ENCODE measurements at regions of chr21 and their contacts with region 1.

Region 1: GRCh38 chr21:44657635-44658540 is at the start of gene KRTAP12-3:
- DNase-seq: peak; percentile 33 to 94 (median 60)
- ATAC-seq: peak; percentile 66
- H3K4me3 ChIP-seq: peak within 1 kb of the TSS; percentile 8
- H3K4me3 Mint-ChIP-seq: peak within 1 kb of the TSS; percentile 43
- H3K27ac ChIP-seq: peak within 1 kb of the TSS; percentile 73 to 75
- H3K27ac Mint-ChIP-seq: peak within 1 kb of the TSS; percentile 92
- H3K4me1 ChIP-seq: peaks cover 61% of the 10 kb centered on the region
- H3K4me1 Mint-ChIP-seq: peaks cover 61% of the 10 kb centered on the region
- H3K27me3 ChIP-seq: no peaks in the 10 kb centered on the region
- H3K27me3 Mint-ChIP-seq: no peaks in the 10 kb centered on the region
- CTCF ChIP-seq: no peak
- total RNA-seq, gene KRTAP12-3: not detected

Region 2: GRCh38 chr21:44547656-44548331 is 110.1 kb before region 1 on chr21:
- CTCF ChIA-PET with region 1: no interaction called
- POLR2A ChIA-PET with region 1: interaction called, 15 read pairs
- intact Hi-C with region 1: loop called in 1 of 2 experiments (anchors 5 kb)
- DNase-seq: peak in 12 of 14 experiments; percentile 16 to 74 (median 36)
- ATAC-seq: peak; percentile 94
- H3K4me3 ChIP-seq: peak overlapping the region; percentile 38
- H3K4me3 Mint-ChIP-seq: peak overlapping the region; percentile 83
- H3K27ac ChIP-seq: peak overlapping the region; percentile 6 to 72
- H3K27ac Mint-ChIP-seq: peak overlapping the region; percentile 90
- H3K4me1 ChIP-seq: peaks cover 18% of the 10 kb centered on the region
- H3K4me1 Mint-ChIP-seq: peaks cover 33% of the 10 kb centered on the region
- H3K27me3 ChIP-seq: no peaks in the 10 kb centered on the region
- H3K27me3 Mint-ChIP-seq: no peaks in the 10 kb centered on the region
- CTCF ChIP-seq: no peak

Region 3: GRCh38 chr21:44618504-44618903 is 39.4 kb before region 1 on chr21:
- CTCF ChIA-PET with region 1: no interaction called
- POLR2A ChIA-PET with region 1: interaction called, 40 read pairs
- intact Hi-C with region 1: loop called (anchors 2 to 5 kb)
- DNase-seq: peak in 4 of 14 experiments; percentile 23 to 55 (median 34)
- ATAC-seq: peak; percentile 55
- H3K4me3 ChIP-seq: no peak overlapping the region
- H3K4me3 Mint-ChIP-seq: peak overlapping the region; percentile 31
- H3K27ac ChIP-seq: peak overlapping the region; percentile 44 to 74
- H3K27ac Mint-ChIP-seq: peak overlapping the region; percentile 88
- H3K4me1 ChIP-seq: peaks cover 42% of the 10 kb centered on the region
- H3K4me1 Mint-ChIP-seq: peaks cover 52% of the 10 kb centered on the region
- H3K27me3 ChIP-seq: no peaks in the 10 kb centered on the region
- H3K27me3 Mint-ChIP-seq: no peaks in the 10 kb centered on the region
- CTCF ChIP-seq: no peak

Region 4: GRCh38 chr21:44691686-44692085 is 33.8 kb after region 1 on chr21:
- CTCF ChIA-PET with region 1: no interaction called
- POLR2A ChIA-PET with region 1: interaction called, 4 read pairs
- intact Hi-C with region 1: loop called in 1 of 2 experiments (anchors 2 kb)
- DNase-seq: no peak
- ATAC-seq: no peak
- H3K4me3 ChIP-seq: no peak overlapping the region
- H3K4me3 Mint-ChIP-seq: no peak overlapping the region
- H3K27ac ChIP-seq: no peak overlapping the region
- H3K27ac Mint-ChIP-seq: no peak overlapping the region
- H3K4me1 ChIP-seq: peaks cover 5% of the 10 kb centered on the region
- H3K4me1 Mint-ChIP-seq: peaks cover 19% of the 10 kb centered on the region
- H3K27me3 ChIP-seq: peaks cover 2 to 6% of the 10 kb centered on the region in 2 experiments
- H3K27me3 Mint-ChIP-seq: peaks cover 27% of the 10 kb centered on the region
- CTCF ChIP-seq: no peak

Region 5: GRCh38 chr21:44709426-44710293 is 51.8 kb after region 1 on chr21:
- CTCF ChIA-PET with region 1: no interaction called
- POLR2A ChIA-PET with region 1: interaction called, 18 read pairs
- intact Hi-C with region 1: no loop called
- DNase-seq: peak in 5 of 14 experiments; percentile 32 to 47 (median 36)
- ATAC-seq: peak; percentile 59
- H3K4me3 ChIP-seq: peak overlapping the region; percentile 5
- H3K4me3 Mint-ChIP-seq: peak overlapping the region; percentile 62
- H3K27ac ChIP-seq: no peak overlapping the region
- H3K27ac Mint-ChIP-seq: no peak overlapping the region
- H3K4me1 ChIP-seq: peaks cover 54% of the 10 kb centered on the region
- H3K4me1 Mint-ChIP-seq: peaks cover 30% of the 10 kb centered on the region
- H3K27me3 ChIP-seq: peaks cover 78 to 83% of the 10 kb centered on the region in 2 experiments
- H3K27me3 Mint-ChIP-seq: peaks cover 93% of the 10 kb centered on the region
- CTCF ChIP-seq: no peak

Measured in CD4-positive, alpha-beta T cell (primary cell).